A673 (cell line): ENCODE measurements at regions of chrX and their contacts with region 1.

Region 1: GRCh38 chrX:5756616-5757015 is 472.1 kb downstream of the NLGN4X start:
- DNase-seq: no peak
- H3K4me3 ChIP-seq: no peak overlapping the region
- H3K27ac ChIP-seq: no peak overlapping the region
- H3K4me1 ChIP-seq: peaks cover 31% of the 10 kb centered on the region
- H3K27me3 ChIP-seq: no peaks in the 10 kb centered on the region
- CTCF ChIP-seq: no peak

Region 2: GRCh38 chrX:5656544-5656943 is 100.1 kb before region 1 on chrX:
- CTCF ChIA-PET with region 1: no interaction called
- POLR2A ChIA-PET with region 1: no interaction called
- intact Hi-C with region 1: no loop called
- DNase-seq: no peak
- H3K4me3 ChIP-seq: no peak overlapping the region
- H3K27ac ChIP-seq: no peak overlapping the region
- H3K4me1 ChIP-seq: no peaks in the 10 kb centered on the region
- H3K27me3 ChIP-seq: no peaks in the 10 kb centered on the region
- CTCF ChIP-seq: no peak

Region 3: DNA sequence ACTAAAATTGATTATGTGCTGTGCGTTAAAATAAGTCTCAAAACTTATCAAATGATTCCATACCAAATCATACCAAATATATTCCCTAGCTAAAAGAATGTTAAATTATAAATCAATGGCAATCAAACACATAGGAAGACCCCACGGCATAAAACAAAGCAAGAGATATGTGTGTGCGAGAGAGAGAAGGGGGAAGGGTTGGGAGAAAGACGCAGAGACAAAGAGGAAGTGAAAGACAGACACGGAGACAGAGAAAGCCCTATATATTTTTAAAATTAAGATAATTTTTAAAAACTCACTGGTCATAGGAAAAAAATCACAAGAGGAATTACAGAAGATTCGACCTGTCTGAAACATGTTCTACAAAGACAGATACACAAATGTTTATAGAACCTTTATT is 100.6 kb after region 1 on chrX:
- CTCF ChIA-PET with region 1: no interaction called
- POLR2A ChIA-PET with region 1: no interaction called
- intact Hi-C with region 1: loop called (anchors 5 kb)
- DNase-seq: peak; percentile 64
- H3K4me3 ChIP-seq: peak overlapping the region; percentile 30
- H3K27ac ChIP-seq: peak overlapping the region; percentile 84
- H3K4me1 ChIP-seq: peaks cover 36% of the 10 kb centered on the region
- H3K27me3 ChIP-seq: no peaks in the 10 kb centered on the region
- CTCF ChIP-seq: no peak

Region 4: DNA sequence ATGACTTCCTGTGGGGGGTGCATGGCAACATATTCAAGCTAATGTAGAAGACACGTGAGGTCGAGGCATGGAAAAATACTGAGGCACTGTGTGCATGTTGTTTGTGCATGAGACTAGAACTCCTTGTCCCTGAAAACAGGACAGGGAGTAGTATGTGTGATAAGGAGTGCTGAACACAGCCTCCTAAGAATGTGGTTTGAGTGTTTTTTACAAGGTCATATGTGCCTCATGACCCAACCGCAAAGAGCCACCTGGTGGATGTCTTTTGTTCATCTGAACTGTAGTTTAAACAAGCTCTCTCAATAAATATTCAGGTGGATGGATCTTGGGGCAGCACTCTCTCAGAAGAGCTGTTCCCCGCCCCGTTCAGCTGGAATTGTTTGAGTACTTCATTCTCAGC is 245.4 kb after region 1 on chrX:
- CTCF ChIA-PET with region 1: no interaction called
- POLR2A ChIA-PET with region 1: no interaction called
- intact Hi-C with region 1: loop called (anchors 2 kb)
- DNase-seq: peak; percentile 37
- H3K4me3 ChIP-seq: no peak overlapping the region
- H3K27ac ChIP-seq: peak overlapping the region; percentile 85
- H3K4me1 ChIP-seq: peaks cover 70% of the 10 kb centered on the region
- H3K27me3 ChIP-seq: no peaks in the 10 kb centered on the region
- CTCF ChIP-seq: no peak

Region 5: GRCh38 chrX:6363188-6363587 is 606.6 kb after region 1 on chrX:
- CTCF ChIA-PET with region 1: no interaction called
- POLR2A ChIA-PET with region 1: no interaction called
- intact Hi-C with region 1: loop called (anchors 10 kb)
- DNase-seq: peak; percentile 68
- H3K4me3 ChIP-seq: no peak overlapping the region
- H3K27ac ChIP-seq: no peak overlapping the region
- H3K4me1 ChIP-seq: peaks cover 7% of the 10 kb centered on the region
- H3K27me3 ChIP-seq: no peaks in the 10 kb centered on the region
- CTCF ChIP-seq: peak; percentile 62